Activated T-helper 2 cell treated with anti-CD3 and anti-CD28 coated beads, Interferon-gamma antibody, Interleukin-2, Interleukin-4, amounts not matched to agents 10 μg/mL and 5 μg/mL and 100 μg/mL, durations not matched to agents 14 hours and 24 hours and 36 hours (primary cell): ENCODE measurements at regions of chr15 and their contacts with region 1.

Region 1: GRCh38 chr15:89358755-89359439 is 24.3 kb upstream of the POLG start:
- DNase-seq: peak; percentile 80
- H3K4me3 Mint-ChIP-seq: peak overlapping the region; percentile 77
- H3K27ac Mint-ChIP-seq: no peak overlapping the region
- H3K4me1 Mint-ChIP-seq: peaks cover 5% of the 10 kb centered on the region
- H3K27me3 Mint-ChIP-seq: peaks cover 69% of the 10 kb centered on the region

Region 2: GRCh38 chr15:89430530-89431341 is 71.8 kb after region 1 on chr15:
- intact Hi-C with region 1: loop called (anchors 1 kb)
- DNase-seq: peak; percentile 80
- H3K4me3 Mint-ChIP-seq: peak overlapping the region; percentile 77
- H3K27ac Mint-ChIP-seq: no peak overlapping the region
- H3K4me1 Mint-ChIP-seq: peaks cover 5% of the 10 kb centered on the region
- H3K27me3 Mint-ChIP-seq: peaks cover 28% of the 10 kb centered on the region

Region 3: GRCh38 chr15:89472785-89473256 is 113.9 kb after region 1 on chr15:
- intact Hi-C with region 1: loop called (anchors 1 kb)
- DNase-seq: peak; percentile 36
- H3K4me3 Mint-ChIP-seq: no peak overlapping the region
- H3K27ac Mint-ChIP-seq: no peak overlapping the region
- H3K4me1 Mint-ChIP-seq: no peaks in the 10 kb centered on the region
- H3K27me3 Mint-ChIP-seq: peaks cover 19% of the 10 kb centered on the region